ENCODE measurements at regions of chr20 and their contacts with region 1.

Region 1: DNA sequence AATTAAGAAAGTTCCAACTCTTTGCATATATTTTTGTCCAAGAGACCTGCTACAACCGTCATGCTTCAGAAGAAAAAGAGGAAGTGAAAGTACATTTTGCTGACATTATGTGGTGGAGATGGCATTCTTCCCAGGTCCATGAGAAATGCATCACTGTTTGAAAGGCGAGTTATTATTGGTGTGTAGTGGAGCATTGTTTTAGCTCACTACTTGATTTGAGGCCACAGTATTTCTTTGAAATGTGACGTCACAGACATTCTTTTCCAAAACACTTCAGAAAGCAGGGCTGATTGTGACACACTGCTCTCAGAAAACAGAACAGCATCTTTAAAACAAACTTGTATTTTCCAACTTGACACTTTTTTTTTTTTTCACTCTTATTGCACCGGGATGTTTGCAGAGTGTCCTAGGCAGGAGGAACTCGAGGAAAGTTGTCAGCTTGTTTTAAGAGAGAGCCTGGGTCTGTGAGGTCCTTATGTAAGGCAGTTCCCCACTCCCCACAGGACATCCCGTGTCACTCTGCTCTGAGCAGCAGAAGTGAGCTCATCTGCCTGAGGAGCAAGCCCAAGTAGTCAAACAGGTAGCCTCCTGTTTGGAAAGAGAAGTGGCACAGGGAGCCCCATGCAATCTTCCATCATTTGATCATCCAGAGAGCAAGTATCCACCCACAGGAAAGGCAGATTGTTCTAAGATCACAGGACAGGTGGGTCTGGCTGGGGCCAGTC is 1.1 kb downstream of the SPTLC3 start:
- DNase-seq: peak in 2 of 5 donors; percentile 38 to 55
- ATAC-seq: peak; percentile 88 to 93 (median 89)
- H3K4me3 ChIP-seq: peak overlapping the region in 11 of 12 donors; percentile 24 to 63 (median 53)
- H3K27ac ChIP-seq: peak overlapping the region; percentile 22 to 85 (median 66)
- H3K4me1 ChIP-seq: peaks cover 0 to 28% (median 14%) of the 10 kb centered on the region in 12 donors
- H3K27me3 ChIP-seq: no peaks in the 10 kb centered on the region
- CTCF ChIP-seq: no peak
- POLR2A ChIP-seq: no peak

Region 2: GRCh38 chr20:13046409-13046808 is 36.6 kb after region 1 on chr20:
- intact Hi-C with region 1: no loop called
- DNase-seq: no peak
- ATAC-seq: no peak
- H3K4me3 ChIP-seq: no peak overlapping the region
- H3K27ac ChIP-seq: no peak overlapping the region
- H3K4me1 ChIP-seq: peaks cover 0 to 9% (median 0%) of the 10 kb centered on the region in 12 donors
- H3K27me3 ChIP-seq: no peaks in the 10 kb centered on the region
- CTCF ChIP-seq: no peak
- POLR2A ChIP-seq: no peak

Region 3: DNA sequence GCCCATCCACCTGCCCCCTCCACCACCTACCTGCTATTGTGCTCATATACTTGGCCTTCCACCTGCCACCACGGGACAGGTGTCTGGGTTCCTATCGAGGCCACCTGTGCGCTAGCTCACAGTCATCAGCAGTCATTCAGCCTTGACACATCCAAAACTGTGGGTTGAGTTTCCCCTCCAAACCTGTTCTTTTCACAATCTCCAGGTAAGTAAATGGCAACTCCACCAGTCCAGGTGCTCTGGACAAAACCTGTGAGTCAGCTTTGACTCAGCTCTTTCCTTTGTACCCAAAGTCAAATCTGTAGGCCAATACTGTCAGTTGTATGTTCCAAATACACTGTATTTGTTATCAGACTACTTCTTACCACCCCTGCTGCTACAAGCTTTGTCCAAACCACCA is 51.5 kb after region 1 on chr20:
- intact Hi-C with region 1: loop called in 2 of 10 experiments (anchors 5 to 10 kb)
- DNase-seq: no peak
- ATAC-seq: no peak
- H3K4me3 ChIP-seq: no peak overlapping the region
- H3K27ac ChIP-seq: no peak overlapping the region
- H3K4me1 ChIP-seq: peaks cover 0 to 9% (median 0%) of the 10 kb centered on the region in 12 donors
- H3K27me3 ChIP-seq: no peaks in the 10 kb centered on the region
- CTCF ChIP-seq: no peak
- POLR2A ChIP-seq: no peak

Region 4: GRCh38 chr20:13068349-13068748 is 58.5 kb after region 1 on chr20:
- intact Hi-C with region 1: loop called in 3 of 10 experiments (anchors 5 to 10 kb)
- DNase-seq: no peak
- ATAC-seq: no peak
- H3K4me3 ChIP-seq: no peak overlapping the region
- H3K27ac ChIP-seq: no peak overlapping the region
- H3K4me1 ChIP-seq: peaks cover 0 to 4% (median 0%) of the 10 kb centered on the region in 12 donors
- H3K27me3 ChIP-seq: no peaks in the 10 kb centered on the region
- CTCF ChIP-seq: no peak
- POLR2A ChIP-seq: no peak

Region 5: GRCh38 chr20:13492001-13492481 is 482.2 kb after region 1 on chr20:
- intact Hi-C with region 1: no loop called
- DNase-seq: peak in 2 of 5 donors; percentile 23 to 35
- ATAC-seq: peak; percentile 55 to 94 (median 72)
- H3K4me3 ChIP-seq: no peak overlapping the region
- H3K27ac ChIP-seq: peak overlapping the region in 2 of 12 donors; percentile 4 to 50
- H3K4me1 ChIP-seq: peaks cover 0 to 20% (median 5%) of the 10 kb centered on the region in 12 donors
- H3K27me3 ChIP-seq: no peaks in the 10 kb centered on the region
- CTCF ChIP-seq: no peak
- POLR2A ChIP-seq: no peak

Measured in heart left ventricle (tissue), 16 donors.